Activated CD4-positive, alpha-beta memory T cell treated with anti-CD3 and anti-CD28 coated beads, Interleukin-2, amount 10 ng/mL, durations not matched to agents 7 days and 5 days (primary cell): ENCODE measurements at regions of chr7 and their contacts with region 1.

Region 1: DNA sequence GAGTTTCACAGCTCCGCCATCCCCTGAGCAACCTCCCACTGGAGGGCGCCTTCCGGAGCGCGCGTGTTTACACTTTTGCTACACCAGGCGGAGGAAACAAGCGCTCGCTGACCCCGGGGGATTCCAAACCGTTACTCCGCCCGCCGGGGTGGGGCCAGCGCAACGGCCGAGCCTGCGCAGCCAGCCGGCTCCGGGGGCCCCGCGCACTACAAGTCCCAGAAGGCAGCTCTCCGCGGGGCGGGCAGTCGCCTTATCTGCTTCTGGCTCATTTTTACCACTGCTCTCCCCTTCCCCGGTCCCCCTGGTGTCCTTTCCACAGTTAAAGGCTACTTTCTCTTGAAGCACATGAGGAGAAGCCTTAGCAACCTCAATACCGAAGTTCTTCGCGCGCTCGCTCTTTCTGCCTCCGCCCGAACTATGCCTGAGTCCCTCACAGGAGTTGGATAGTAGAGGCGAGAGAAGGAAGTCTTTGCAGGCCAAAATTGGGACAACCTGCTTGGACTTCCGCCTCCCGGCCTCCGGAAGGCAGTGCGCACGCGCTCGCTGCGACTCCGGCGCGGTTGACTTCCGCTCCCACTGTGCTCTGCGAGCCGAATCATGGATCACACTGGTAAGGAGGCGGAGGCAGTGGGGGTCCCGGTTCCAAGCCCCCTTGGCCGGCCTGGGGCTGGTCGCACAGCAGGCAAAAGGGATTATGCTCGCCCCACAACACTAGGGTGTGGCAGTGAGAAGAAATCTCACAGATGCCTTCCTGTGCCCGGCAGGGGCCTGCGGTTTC is at the start of gene CBLL1:
- DNase-seq: peak; percentile 99
- H3K4me3 Mint-ChIP-seq: peak within 1 kb of the TSS; percentile 97
- H3K27ac Mint-ChIP-seq: peak within 1 kb of the TSS; percentile 100
- H3K4me1 Mint-ChIP-seq: peaks cover 49% of the 10 kb centered on the region
- H3K27me3 Mint-ChIP-seq: no peaks in the 10 kb centered on the region
- total RNA-seq, gene CBLL1: 44.0 to 50.5 TPM

Region 2: DNA sequence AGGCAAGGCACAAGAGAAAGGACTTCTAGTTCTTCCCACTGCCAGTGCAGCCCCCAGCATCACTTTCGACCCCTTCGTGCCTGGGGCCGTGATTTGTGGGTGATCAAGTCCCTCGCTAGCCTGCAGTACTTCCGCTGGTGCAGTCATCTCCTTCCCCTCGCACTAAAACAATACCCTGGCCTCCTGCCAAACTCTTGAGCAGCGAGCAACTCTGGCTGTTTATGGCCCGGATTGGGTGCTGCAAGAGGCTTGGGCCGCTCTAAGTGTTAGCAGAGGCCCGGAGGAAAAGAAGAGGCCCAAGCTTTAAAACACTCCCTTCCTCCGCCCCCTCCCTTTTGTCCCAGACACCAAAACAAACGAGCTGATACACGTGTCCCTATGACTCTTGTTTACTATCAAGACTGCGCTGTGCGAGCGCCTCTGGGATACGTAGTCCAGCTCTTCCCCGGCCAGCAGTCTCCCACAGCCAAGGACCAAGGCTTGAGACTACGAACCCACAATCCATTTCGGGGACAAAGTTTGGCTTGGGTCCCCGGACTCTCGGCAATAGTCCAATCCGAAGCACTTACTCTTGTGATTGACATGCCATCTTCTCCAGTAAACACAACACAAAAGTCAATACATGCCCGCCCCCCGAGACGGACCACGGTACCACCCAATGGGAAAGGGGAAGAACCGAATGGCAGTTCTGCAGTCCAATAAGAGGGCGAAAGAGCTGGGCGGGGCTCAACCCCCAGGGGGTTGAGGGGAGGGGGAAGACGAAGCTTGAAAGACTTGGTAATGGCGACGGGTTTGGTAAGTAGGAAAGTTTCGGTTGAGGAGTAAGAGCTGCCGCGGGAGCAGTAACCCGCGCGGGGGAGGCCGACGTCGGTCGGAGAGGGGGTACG is 575.3 kb before region 1 on chr7 and contains the start of gene HBP1:
- CTCF ChIA-PET with region 1: interaction called, 11 read pairs
- POLR2A ChIA-PET with region 1: interaction called, 53 read pairs
- DNase-seq: peak; percentile 98
- H3K4me3 Mint-ChIP-seq: peak within 1 kb of the TSS; percentile 90
- H3K27ac Mint-ChIP-seq: peak within 1 kb of the TSS; percentile 94
- H3K4me1 Mint-ChIP-seq: peaks cover 32% of the 10 kb centered on the region
- H3K27me3 Mint-ChIP-seq: peaks cover 7% of the 10 kb centered on the region
- total RNA-seq, gene HBP1: 44.0 to 45.5 TPM

Region 3: DNA sequence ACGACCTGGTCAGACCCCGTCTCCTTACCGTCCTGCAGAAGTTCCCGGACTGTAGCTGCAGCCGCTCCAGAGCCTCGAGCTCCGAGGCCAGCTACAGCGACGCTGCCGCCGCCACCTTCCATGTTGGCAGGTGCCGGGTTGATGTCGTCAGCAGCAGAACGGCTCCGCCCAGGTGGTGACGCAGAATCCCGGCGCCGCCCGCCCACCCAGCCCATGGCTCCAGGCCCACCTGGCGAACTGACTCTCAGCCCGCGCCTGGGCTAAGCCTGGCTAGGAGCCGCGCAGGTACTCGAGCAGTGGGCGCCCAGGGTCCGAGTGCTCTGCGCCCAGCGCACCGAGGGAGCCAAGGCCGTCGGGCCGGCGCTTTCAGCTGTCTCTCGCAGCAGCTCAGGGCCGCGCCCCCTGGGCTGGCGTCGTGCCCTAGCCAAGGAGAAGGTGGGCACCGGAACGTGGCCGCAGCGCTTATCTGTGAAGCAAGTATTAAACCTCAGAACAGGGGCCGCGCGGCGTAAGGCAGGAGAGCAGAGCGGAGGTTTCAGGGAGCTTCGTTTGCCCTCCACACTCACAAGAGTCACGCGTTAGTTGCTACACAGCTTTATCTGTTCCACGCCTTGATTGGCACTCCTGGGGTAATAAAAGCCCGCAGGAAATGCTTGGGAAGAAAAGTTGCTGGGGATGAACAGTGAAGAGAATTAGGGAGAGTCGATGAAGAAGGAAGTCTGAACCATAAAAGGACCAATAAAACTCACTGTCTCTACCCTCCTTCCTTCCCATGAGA is 179.8 kb before region 1 on chr7 and contains the starts of genes COG5 and DUS4L:
- CTCF ChIA-PET with region 1: interaction called, 5 read pairs
- POLR2A ChIA-PET with region 1: interaction called, 27 read pairs
- DNase-seq: peak; percentile 88
- H3K4me3 Mint-ChIP-seq: peak within 1 kb of the TSS; percentile 74
- H3K27ac Mint-ChIP-seq: peak within 1 kb of the TSS; percentile 92
- H3K4me1 Mint-ChIP-seq: peaks cover 56% of the 10 kb centered on the region
- H3K27me3 Mint-ChIP-seq: no peaks in the 10 kb centered on the region
- total RNA-seq, gene COG5: 40.1 to 45.3 TPM
- total RNA-seq, gene DUS4L: 8.1 to 8.9 TPM

Region 4: GRCh38 chr7:107661081-107661864 is 82.5 kb before region 1 on chr7:
- CTCF ChIA-PET with region 1: interaction called, 13 read pairs
- POLR2A ChIA-PET with region 1: interaction called, 47 read pairs
- DNase-seq: peak; percentile 67
- H3K4me3 Mint-ChIP-seq: peak overlapping the region; percentile 94
- H3K27ac Mint-ChIP-seq: peak overlapping the region; percentile 89
- H3K4me1 Mint-ChIP-seq: peaks cover 55% of the 10 kb centered on the region
- H3K27me3 Mint-ChIP-seq: no peaks in the 10 kb centered on the region

Region 5: GRCh38 chr7:107779647-107780099 is 35.9 kb after region 1 on chr7:
- CTCF ChIA-PET with region 1: no interaction called
- POLR2A ChIA-PET with region 1: no interaction called
- DNase-seq: no peak
- H3K4me3 Mint-ChIP-seq: no peak overlapping the region
- H3K27ac Mint-ChIP-seq: no peak overlapping the region
- H3K4me1 Mint-ChIP-seq: peaks cover under 1% of the 10 kb centered on the region
- H3K27me3 Mint-ChIP-seq: no peaks in the 10 kb centered on the region

Region 6: GRCh38 chr7:107810626-107811025 is 66.9 kb after region 1 on chr7:
- CTCF ChIA-PET with region 1: no interaction called
- POLR2A ChIA-PET with region 1: no interaction called
- DNase-seq: no peak
- H3K4me3 Mint-ChIP-seq: no peak overlapping the region
- H3K27ac Mint-ChIP-seq: no peak overlapping the region
- H3K4me1 Mint-ChIP-seq: peaks cover 12% of the 10 kb centered on the region
- H3K27me3 Mint-ChIP-seq: no peaks in the 10 kb centered on the region

Region 7: GRCh38 chr7:107836237-107837144 is 92.7 kb after region 1 on chr7:
- CTCF ChIA-PET with region 1: no interaction called
- POLR2A ChIA-PET with region 1: no interaction called
- DNase-seq: no peak
- H3K4me3 Mint-ChIP-seq: no peak overlapping the region
- H3K27ac Mint-ChIP-seq: no peak overlapping the region
- H3K4me1 Mint-ChIP-seq: no peaks in the 10 kb centered on the region
- H3K27me3 Mint-ChIP-seq: peaks cover 3% of the 10 kb centered on the region

Region 8: DNA sequence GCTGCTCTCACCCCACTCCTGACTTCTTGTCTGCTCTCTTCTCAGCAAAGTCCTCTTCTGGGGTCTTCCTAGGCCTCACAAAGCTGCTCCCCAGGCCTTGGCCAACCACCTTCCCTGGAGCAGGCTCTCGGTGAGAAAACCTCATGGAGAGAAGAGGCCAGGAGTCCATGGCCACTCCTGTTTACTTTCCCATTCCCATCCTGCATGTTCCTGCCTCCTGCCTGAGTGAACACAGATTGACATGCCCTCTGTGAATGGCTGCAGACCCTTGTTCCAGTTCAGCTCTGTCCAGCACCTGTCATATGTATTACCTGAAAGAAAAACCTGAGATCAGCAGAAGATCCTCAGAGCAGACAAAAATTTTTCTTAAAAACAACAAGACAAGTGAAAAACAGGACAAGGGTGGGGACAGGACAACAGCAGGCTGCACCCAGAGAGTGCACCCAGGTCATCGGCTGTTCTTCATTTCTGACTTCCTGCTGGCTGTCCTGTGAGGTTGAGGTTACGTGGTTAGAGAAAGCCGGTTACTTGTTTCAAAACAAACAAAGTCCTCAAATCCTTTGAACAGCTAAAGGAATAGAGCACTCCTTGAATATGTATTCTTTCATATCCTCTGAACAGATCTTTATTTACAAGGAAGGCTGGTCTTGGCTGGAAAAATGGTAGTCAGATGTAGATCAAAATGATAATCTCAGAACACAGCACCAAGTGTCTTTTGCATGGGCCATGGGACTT is 113.2 kb after region 1 on chr7:
- CTCF ChIA-PET with region 1: interaction called, 6 read pairs
- POLR2A ChIA-PET with region 1: interaction called, 23 read pairs
- DNase-seq: peak; percentile 64
- H3K4me3 Mint-ChIP-seq: no peak overlapping the region
- H3K27ac Mint-ChIP-seq: peak overlapping the region; percentile 86
- H3K4me1 Mint-ChIP-seq: peaks cover 27% of the 10 kb centered on the region
- H3K27me3 Mint-ChIP-seq: no peaks in the 10 kb centered on the region

Region 9: DNA sequence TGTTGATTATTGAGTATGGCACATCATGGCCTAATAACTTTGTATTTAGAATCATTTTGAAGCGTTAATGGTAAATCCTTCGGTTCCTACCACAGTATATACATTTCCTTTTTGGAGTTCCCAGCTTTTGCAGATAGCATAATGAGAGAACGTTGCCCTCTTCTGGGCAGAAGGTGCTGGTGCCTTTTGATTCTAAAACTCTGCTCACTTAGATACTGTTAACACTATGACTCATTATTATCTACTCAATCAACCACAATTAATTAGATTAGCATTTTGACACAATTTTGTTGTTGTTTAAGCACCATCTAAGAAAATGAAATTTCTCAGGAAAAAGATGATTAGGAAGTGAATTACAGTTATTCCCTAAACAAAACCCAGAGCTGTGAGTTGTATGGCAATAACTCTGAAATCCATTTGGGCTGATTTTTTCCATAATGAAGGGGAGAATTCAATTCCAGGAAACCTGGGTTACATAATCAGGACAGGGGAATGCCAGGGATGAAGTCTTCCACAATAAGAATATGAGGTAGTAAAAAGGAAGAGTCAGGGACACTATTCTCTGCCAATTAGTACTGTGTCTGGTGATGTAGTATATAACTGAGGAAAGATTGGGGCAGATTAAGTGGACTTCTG is 135.8 kb after region 1 on chr7:
- CTCF ChIA-PET with region 1: interaction called, 178 read pairs
- POLR2A ChIA-PET with region 1: interaction called, 69 read pairs
- DNase-seq: peak; percentile 40
- H3K4me3 Mint-ChIP-seq: no peak overlapping the region
- H3K27ac Mint-ChIP-seq: no peak overlapping the region
- H3K4me1 Mint-ChIP-seq: peaks cover 31% of the 10 kb centered on the region
- H3K27me3 Mint-ChIP-seq: peaks cover 8% of the 10 kb centered on the region